ENCODE measurements at regions of chrX and their contacts with region 1.

Region 1: DNA sequence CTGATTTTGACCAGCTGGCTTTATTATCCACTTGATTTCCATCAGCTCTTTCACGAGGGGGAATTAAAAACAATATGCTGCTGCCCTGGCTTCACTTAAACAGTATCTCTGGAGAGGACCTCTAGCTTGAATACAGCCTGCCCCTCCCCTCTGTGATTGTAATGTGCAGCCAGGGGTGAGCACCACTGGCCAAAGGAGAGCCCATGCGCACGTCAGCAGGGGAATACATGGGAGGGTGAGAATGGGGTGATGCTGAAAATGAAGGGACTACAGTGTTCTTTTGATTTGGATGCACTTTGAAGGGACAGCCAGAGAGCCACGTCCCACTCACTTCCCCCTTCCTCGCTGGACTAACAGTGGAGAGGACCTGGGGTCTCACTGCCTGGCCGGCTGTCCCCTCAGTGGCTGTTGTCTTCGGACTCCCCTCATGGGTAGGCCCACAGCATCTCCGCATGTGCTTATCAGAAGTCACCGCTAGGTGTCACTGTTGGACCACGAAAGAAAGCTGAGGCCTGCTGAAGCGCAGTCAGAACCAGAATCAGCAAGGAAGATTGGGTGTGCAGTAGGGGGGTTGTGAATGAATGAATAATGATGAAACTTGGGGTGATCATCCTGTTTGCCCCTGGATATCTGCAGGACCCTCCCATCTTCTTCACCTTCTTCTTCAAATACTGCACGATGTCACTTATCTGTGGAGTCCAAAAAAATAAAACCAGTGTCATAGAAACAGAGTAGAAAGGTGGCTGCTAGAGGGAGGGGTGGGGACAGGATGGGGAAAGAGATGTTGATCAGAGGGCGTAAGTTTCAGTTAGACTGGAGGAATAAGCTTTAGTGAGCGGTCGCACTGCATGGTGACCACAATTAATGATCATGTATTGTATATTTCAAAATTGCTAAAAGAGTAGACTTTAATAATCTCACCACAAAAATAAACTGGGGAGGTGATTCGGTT is 32.8 kb downstream of the CLCN4 start:
- DNase-seq: peak; percentile 49
- ATAC-seq: peak; percentile 84
- H3K4me3 Mint-ChIP-seq: no peak overlapping the region
- H3K27ac Mint-ChIP-seq: peak overlapping the region; percentile 50
- H3K4me1 Mint-ChIP-seq: peaks cover 10% of the 10 kb centered on the region
- H3K27me3 Mint-ChIP-seq: no peaks in the 10 kb centered on the region
- CTCF ChIP-seq: no peak

Region 2: GRCh38 chrX:10156199-10157031 is 33.2 kb before region 1 on chrX and contains the start of gene CLCN4:
- CTCF ChIA-PET with region 1: no interaction called
- POLR2A ChIA-PET with region 1: no interaction called
- intact Hi-C with region 1: no loop called
- DNase-seq: peak; percentile 26
- ATAC-seq: peak; percentile 65
- H3K4me3 Mint-ChIP-seq: peak within 1 kb of the TSS; percentile 83
- H3K27ac Mint-ChIP-seq: peak within 1 kb of the TSS; percentile 90
- H3K4me1 Mint-ChIP-seq: peaks cover 34% of the 10 kb centered on the region
- H3K27me3 Mint-ChIP-seq: no peaks in the 10 kb centered on the region
- CTCF ChIP-seq: no peak
- total RNA-seq, gene CLCN4: 3.4 and 4.7 TPM in 2 replicates

Region 3: GRCh38 chrX:10217198-10217597 is 27.6 kb after region 1 on chrX:
- CTCF ChIA-PET with region 1: interaction called, 11 read pairs
- POLR2A ChIA-PET with region 1: no interaction called
- intact Hi-C with region 1: loop called (anchors 1 kb)
- DNase-seq: no peak
- ATAC-seq: no peak
- H3K4me3 Mint-ChIP-seq: no peak overlapping the region
- H3K27ac Mint-ChIP-seq: no peak overlapping the region
- H3K4me1 Mint-ChIP-seq: peaks cover 13% of the 10 kb centered on the region
- H3K27me3 Mint-ChIP-seq: no peaks in the 10 kb centered on the region
- CTCF ChIP-seq: no peak

Region 4: GRCh38 chrX:10597871-10598270 is 408.3 kb after region 1 on chrX:
- CTCF ChIA-PET with region 1: interaction called, 66 read pairs
- POLR2A ChIA-PET with region 1: interaction called, 3 read pairs
- intact Hi-C with region 1: loop called (anchors 1 kb)
- DNase-seq: no peak
- ATAC-seq: peak; percentile 28
- H3K4me3 Mint-ChIP-seq: no peak overlapping the region
- H3K27ac Mint-ChIP-seq: no peak overlapping the region
- H3K4me1 Mint-ChIP-seq: no peaks in the 10 kb centered on the region
- H3K27me3 Mint-ChIP-seq: no peaks in the 10 kb centered on the region
- CTCF ChIP-seq: no peak

Region 5: DNA sequence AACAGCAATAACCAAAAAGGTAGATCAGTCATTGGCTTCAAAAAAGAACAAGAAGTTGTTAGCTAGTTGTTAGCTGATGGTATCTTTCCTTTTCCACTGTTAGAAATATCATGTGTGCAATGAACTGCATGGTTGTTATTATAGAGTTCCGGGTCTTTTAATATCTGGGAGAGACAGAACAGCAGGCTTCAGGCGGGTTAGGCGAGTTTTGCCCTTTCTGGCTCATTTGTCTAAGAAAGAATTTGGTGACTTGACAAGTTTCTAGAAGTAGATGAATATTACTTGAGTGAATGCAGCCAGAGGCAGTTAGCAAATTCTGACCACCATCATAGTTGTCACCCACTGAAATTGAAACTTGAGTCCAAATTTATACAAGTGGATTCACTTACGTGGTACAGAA is 519.7 kb after region 1 on chrX:
- CTCF ChIA-PET with region 1: no interaction called
- POLR2A ChIA-PET with region 1: no interaction called
- intact Hi-C with region 1: no loop called
- DNase-seq: no peak
- ATAC-seq: no peak
- H3K4me3 Mint-ChIP-seq: no peak overlapping the region
- H3K27ac Mint-ChIP-seq: no peak overlapping the region
- H3K4me1 Mint-ChIP-seq: peaks cover 1% of the 10 kb centered on the region
- H3K27me3 Mint-ChIP-seq: no peaks in the 10 kb centered on the region
- CTCF ChIP-seq: no peak

Region 6: GRCh38 chrX:10722851-10723250 is 533.3 kb after region 1 on chrX:
- CTCF ChIA-PET with region 1: interaction called, 55 read pairs
- POLR2A ChIA-PET with region 1: no interaction called
- intact Hi-C with region 1: loop called (anchors 1 kb)
- DNase-seq: no peak
- ATAC-seq: peak; percentile 61
- H3K4me3 Mint-ChIP-seq: no peak overlapping the region
- H3K27ac Mint-ChIP-seq: no peak overlapping the region
- H3K4me1 Mint-ChIP-seq: no peaks in the 10 kb centered on the region
- H3K27me3 Mint-ChIP-seq: no peaks in the 10 kb centered on the region
- CTCF ChIP-seq: no peak

Region 7: GRCh38 chrX:11137543-11138139 is 948.0 kb after region 1 on chrX:
- CTCF ChIA-PET with region 1: interaction called, 19 read pairs
- POLR2A ChIA-PET with region 1: no interaction called
- intact Hi-C with region 1: loop called (anchors 1 kb)
- DNase-seq: no peak
- ATAC-seq: no peak
- H3K4me3 Mint-ChIP-seq: no peak overlapping the region
- H3K27ac Mint-ChIP-seq: no peak overlapping the region
- H3K4me1 Mint-ChIP-seq: no peaks in the 10 kb centered on the region
- H3K27me3 Mint-ChIP-seq: no peaks in the 10 kb centered on the region
- CTCF ChIP-seq: no peak